Panc1 (cell line): ENCODE measurements at regions of chr1 and their contacts with region 1.

Region 1: GRCh38 chr1:179025125-179025974 is at the start of gene FAM20B:
- DNase-seq: no peak
- ATAC-seq: peak; percentile 91
- H3K4me3 ChIP-seq: peak within 1 kb of the TSS; percentile 88
- H3K27ac ChIP-seq: peak within 1 kb of the TSS; percentile 95
- H3K4me1 ChIP-seq: peaks cover 29% of the 10 kb centered on the region
- H3K27me3 ChIP-seq: no peaks in the 10 kb centered on the region
- CTCF ChIP-seq: no peak
- total RNA-seq, gene FAM20B: 49.9 TPM

Region 2: DNA sequence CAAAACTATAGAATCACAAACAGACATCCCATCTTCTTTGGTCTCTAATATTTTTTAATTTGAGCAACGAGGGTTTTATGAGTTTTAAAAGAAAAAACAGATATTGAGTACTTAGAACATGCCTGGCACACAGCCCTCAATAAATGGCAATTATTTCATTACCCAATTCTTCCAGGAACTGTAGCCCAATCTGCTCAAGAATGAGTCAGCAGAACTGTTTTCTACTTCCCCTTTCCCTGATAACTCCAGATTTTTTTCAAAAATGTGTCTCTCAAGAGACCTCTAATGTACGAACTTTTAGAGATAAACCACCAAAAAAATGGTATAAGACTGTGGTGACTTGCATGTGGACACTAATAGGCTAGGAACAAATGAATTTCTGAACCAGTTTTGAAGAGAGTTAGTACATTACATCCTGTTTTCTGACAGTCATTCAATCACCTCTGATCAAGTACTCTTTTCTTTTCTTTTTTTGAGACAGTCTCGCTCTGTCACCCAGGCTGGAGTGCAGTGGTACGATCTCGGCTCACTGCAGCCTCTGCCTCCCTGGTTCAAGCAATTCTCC is 192.7 kb after region 1 on chr1:
- CTCF ChIA-PET with region 1: no interaction called
- POLR2A ChIA-PET with region 1: interaction called, 13 read pairs
- in situ Hi-C with region 1: no loop called
- intact Hi-C with region 1: no loop called
- DNase-seq: no peak
- ATAC-seq: no peak
- H3K4me3 ChIP-seq: no peak overlapping the region
- H3K27ac ChIP-seq: no peak overlapping the region
- H3K4me1 ChIP-seq: no peaks in the 10 kb centered on the region
- H3K27me3 ChIP-seq: no peaks in the 10 kb centered on the region
- CTCF ChIP-seq: no peak

Region 3: DNA sequence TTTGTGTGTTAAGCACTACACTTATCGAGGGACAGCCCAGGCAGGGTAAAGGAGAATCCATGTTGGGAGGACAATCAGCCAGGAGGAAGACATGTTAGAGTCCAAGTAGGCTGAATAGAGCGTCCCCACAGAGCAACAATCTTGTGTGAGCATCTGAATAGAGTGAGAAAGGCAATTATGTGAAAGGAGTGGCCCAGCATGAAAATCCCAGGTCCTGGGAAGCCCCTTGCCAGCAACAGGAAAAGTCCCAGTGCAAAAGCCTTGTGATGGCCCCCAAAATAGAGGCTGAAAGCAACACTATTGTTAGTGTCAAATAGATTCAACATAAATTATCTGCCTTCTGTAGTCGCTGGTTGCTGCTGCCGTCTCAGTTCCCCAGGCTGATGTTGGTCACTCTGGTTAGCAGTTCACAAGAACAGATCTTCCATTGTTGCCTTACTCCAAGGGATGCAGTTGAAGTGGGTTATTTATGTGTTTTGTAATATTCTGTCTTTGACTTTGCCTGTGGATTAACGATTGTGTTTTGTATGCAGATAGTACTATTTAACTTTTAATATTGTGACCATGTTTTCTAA is 216.3 kb after region 1 on chr1:
- CTCF ChIA-PET with region 1: no interaction called
- POLR2A ChIA-PET with region 1: no interaction called
- in situ Hi-C with region 1: no loop called
- intact Hi-C with region 1: no loop called
- DNase-seq: no peak
- ATAC-seq: no peak
- H3K4me3 ChIP-seq: no peak overlapping the region
- H3K27ac ChIP-seq: no peak overlapping the region
- H3K4me1 ChIP-seq: no peaks in the 10 kb centered on the region
- H3K27me3 ChIP-seq: no peaks in the 10 kb centered on the region
- CTCF ChIP-seq: no peak

Region 4: GRCh38 chr1:179840107-179840506 is 814.8 kb after region 1 on chr1:
- CTCF ChIA-PET with region 1: no interaction called
- POLR2A ChIA-PET with region 1: interaction called, 10 read pairs
- in situ Hi-C with region 1: no loop called
- intact Hi-C with region 1: no loop called
- DNase-seq: no peak
- ATAC-seq: no peak
- H3K4me3 ChIP-seq: no peak overlapping the region
- H3K27ac ChIP-seq: no peak overlapping the region
- H3K4me1 ChIP-seq: no peaks in the 10 kb centered on the region
- H3K27me3 ChIP-seq: no peaks in the 10 kb centered on the region
- CTCF ChIP-seq: no peak